ENCODE measurements at regions of chr11 and their contacts with region 1.

Region 1: DNA sequence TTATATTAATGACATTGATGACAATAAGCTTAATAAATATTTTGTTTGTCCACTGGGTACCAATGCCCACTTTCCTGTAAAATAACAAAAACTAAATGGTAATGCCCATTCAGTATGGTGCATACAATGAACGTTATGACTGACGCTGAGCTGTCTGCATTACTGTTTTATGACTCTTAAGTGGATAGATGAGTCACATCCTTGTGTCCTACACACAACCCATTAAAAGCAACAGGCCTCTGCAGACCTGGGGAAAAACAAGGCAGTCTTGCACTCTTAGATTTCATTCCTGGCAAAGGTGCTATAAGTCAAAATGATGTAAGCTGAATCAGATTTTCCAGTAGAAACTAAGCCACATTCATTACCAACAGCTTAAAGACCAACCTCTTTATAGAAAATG is 176.3 kb upstream of the TMEM45B start:
- DNase-seq: peak; percentile 99
- H3K4me3 ChIP-seq: no peak overlapping the region
- H3K27ac ChIP-seq: peak overlapping the region; percentile 95
- H3K4me1 ChIP-seq: peaks cover 76% of the 10 kb centered on the region
- H3K27me3 ChIP-seq: no peaks in the 10 kb centered on the region
- CTCF ChIP-seq: no peak

Region 2: DNA sequence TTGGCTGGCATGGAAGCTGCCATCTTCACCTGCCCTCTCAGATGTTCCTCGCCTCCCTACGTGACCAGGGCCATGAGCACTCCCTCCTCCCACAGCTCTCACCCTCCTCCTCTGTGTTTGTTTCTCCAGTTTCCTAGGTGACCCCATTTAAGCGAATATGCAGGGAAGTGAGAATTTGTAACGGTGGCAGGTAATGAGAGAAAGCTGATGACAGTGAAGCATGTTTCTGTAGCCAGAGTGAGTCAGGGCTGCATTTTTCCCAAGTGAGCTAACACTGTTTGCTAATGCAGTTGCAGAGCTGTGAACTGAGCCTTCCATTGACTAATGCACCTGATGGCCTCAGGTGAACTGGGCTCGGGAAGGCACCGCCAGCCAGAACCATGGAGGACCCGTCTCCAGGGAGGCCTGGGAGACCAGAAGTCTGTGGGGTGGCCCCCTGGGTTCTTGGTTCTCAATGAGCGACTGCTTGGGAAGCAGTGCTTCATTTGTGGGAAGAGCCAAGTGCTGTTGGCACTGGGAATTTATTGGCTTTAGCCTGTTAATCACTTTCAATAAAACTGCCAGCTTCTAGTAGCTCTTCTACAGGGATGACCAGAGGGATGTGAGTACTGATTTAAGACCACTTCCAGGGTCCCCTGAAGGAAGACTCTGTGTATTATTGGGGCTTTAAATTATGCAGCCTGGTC is 199.1 kb before region 1 on chr11:
- CTCF ChIA-PET with region 1: interaction called, 3 read pairs
- dilution Hi-C with region 1: no loop called
- in situ Hi-C with region 1: no loop called
- intact Hi-C with region 1: loop called (anchors 1 kb)
- DNase-seq: peak; percentile 99
- H3K4me3 ChIP-seq: no peak overlapping the region
- H3K27ac ChIP-seq: peak overlapping the region; percentile 73
- H3K4me1 ChIP-seq: peaks cover 18% of the 10 kb centered on the region
- H3K27me3 ChIP-seq: no peaks in the 10 kb centered on the region
- CTCF ChIP-seq: no peak

Region 3: DNA sequence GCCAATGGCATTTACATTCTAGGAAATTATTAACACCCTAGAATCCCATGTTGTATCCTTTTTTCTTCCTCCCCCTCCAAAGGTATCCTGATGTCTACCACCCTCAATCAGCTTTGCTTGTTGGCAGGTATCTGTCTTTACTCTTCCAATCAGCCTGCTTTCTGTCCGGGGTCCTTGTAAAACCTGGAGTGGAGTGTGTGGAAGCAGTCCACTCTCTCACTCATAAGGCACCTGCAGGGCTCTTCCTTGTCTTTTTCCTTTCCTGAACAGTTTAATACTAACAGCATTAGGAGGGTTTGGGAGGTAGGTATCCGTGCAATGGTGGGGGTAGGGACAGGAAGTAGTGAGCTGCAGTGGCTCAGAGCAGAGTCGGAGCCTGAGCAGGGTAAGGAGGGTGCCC is 70.3 kb before region 1 on chr11:
- CTCF ChIA-PET with region 1: no interaction called
- dilution Hi-C with region 1: no loop called
- in situ Hi-C with region 1: no loop called
- intact Hi-C with region 1: no loop called
- DNase-seq: no peak
- H3K4me3 ChIP-seq: no peak overlapping the region
- H3K27ac ChIP-seq: no peak overlapping the region
- H3K4me1 ChIP-seq: no peaks in the 10 kb centered on the region
- H3K27me3 ChIP-seq: no peaks in the 10 kb centered on the region
- CTCF ChIP-seq: no peak